Naive thymus-derived CD4-positive, alpha-beta T cell (primary cell): ENCODE measurements at regions of chr12 and their contacts with region 1.

Region 1: DNA sequence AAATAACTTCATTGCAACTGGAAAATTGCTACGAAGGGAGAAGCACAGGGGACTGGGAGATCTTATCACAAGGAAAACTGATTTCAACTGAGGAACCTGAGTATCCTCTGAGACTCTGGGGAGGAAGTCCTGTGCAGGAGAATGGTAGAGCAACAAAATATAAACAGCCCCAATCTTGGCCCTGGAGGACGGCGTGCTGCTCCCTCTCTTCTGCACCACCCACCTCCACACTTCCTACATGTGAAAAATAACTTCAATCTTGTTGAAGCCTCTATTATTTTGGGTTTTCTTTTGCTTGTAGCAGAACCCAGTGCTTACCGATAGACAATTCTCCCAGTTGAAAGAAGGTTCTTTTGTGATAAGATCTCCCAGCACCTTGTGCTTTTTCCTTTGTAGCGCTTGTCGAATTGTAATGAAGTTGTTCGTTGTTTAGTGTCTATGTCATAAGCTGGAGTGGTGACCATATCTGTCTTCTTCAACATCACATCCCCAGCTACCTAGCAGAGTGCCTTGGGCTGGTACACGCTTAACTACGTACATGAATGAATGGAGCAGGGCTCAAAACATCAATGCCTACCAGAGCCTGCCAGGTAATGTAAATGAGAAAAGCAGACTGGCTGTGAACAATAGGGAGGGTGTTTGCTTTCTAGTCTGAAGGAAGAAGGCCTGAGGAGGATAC is 2.8 kb upstream of the CD4 start:
- DNase-seq: peak in 7 of 9 donors; percentile 64 to 89 (median 87)
- ATAC-seq: peak; percentile 85
- H3K4me3 ChIP-seq: peak overlapping the region; percentile 4
- H3K4me3 Mint-ChIP-seq: peak overlapping the region; percentile 67 to 83 (median 76)
- H3K27ac ChIP-seq: peak overlapping the region; percentile 88
- H3K27ac Mint-ChIP-seq: peak overlapping the region; percentile 92 to 98 (median 96)
- H3K4me1 ChIP-seq: peaks cover 0 to 67% of the 10 kb centered on the region in 2 donors
- H3K4me1 Mint-ChIP-seq: peaks cover 35 to 79% (median 70%) of the 10 kb centered on the region in 7 donors
- H3K27me3 ChIP-seq: no peaks in the 10 kb centered on the region
- H3K27me3 Mint-ChIP-seq: no peaks in the 10 kb centered on the region

Region 2: GRCh38 chr12:6771091-6771495 is 15.5 kb before region 1 on chr12:
- CTCF ChIA-PET with region 1: interaction called, 24 read pairs
- POLR2A ChIA-PET with region 1: interaction called, 18 read pairs
- intact Hi-C with region 1: loop called (anchors 1 to 2 kb)
- DNase-seq: no peak
- ATAC-seq: no peak
- H3K4me3 ChIP-seq: no peak overlapping the region
- H3K4me3 Mint-ChIP-seq: peak overlapping the region in 5 of 10 donors; percentile 34 to 87 (median 73)
- H3K27ac ChIP-seq: no peak overlapping the region
- H3K27ac Mint-ChIP-seq: peak overlapping the region in 3 of 9 donors; percentile 65 to 91 (median 76)
- H3K4me1 ChIP-seq: peaks cover 17 to 35% of the 10 kb centered on the region in 2 donors
- H3K4me1 Mint-ChIP-seq: peaks cover 32 to 72% (median 45%) of the 10 kb centered on the region in 7 donors
- H3K27me3 ChIP-seq: no peaks in the 10 kb centered on the region
- H3K27me3 Mint-ChIP-seq: peaks cover 0 to 53% (median 17%) of the 10 kb centered on the region in 5 donors